ENCODE measurements at regions of chr12 and their contacts with region 1.

Region 1: DNA sequence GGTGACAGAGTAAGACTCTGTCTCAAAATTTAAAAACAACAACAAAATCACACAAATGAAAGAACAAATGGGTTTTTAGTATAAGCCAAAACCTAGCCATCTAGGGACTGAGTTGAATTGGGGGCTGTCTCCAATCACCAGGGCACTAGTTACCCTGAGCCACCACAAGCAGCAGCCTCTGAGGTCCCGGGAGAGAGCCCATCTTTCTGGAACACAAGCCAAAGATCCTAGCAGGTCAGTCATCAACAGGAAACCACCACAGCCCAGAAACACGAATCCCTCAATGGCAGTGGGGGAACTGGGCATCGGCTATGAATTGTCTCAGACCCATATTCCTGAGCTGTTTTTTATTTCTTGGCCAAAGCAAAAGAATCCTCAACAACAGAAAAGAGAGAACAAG is 75.3 kb downstream of the KDM2B start:
- DNase-seq: no peak
- H3K4me3 ChIP-seq: no peak overlapping the region
- CTCF ChIP-seq: no peak

Region 2: GRCh38 chr12:121678716-121679580 is 173.4 kb after region 1 on chr12:
- CTCF ChIA-PET with region 1: interaction called, 191 read pairs
- POLR2A ChIA-PET with region 1: no interaction called
- DNase-seq: no peak
- H3K4me3 ChIP-seq: no peak overlapping the region
- CTCF ChIP-seq: no peak